Activated naive CD8-positive, alpha-beta T cell treated with anti-CD3 and anti-CD28 coated beads, Interleukin-2, amount 10 ng/mL, durations not matched to agents 7 days and 5 days (primary cell): ENCODE measurements at regions of chr2 and their contacts with region 1.

Region 1: DNA sequence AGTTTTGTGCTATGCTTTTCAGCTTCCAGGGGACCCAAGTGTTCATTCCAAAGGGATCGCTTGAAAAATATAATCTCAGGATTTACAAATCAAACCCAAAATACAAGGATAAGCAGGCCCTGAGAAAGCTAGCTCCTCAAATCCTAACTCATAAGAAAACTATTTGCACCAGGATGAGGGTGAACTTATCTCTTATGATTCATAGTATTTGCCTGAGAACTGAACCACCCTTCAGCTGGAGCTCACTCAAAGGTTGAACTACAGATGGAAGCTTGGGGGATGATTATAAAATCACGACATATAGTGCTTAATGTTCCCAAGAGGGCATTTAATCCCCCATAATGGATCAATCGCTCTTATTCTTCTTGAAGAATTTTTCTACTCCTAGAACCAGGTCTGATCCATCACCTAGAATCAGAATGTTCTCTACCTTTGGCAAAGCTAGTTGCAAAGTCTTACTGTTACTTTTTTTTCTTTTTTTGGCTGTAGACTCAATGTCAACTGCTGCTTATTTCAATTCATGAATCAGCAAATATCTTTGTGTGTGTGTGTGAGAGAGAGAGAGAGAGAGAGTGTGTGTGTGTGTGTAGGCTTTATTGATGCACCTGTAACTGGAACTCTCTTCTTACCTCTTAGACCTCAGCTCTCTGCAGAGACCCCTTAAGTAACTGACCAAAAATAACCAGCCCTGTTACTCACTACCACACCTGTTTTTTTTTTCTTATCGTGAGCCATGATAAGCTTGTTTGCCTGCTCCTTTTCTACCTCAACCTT is 44.8 kb downstream of the ARL4C start:
- DNase-seq: no peak
- ATAC-seq: peak; percentile 9
- H3K4me3 Mint-ChIP-seq: peak overlapping the region; percentile 91
- H3K27ac Mint-ChIP-seq: peak overlapping the region; percentile 90
- H3K4me1 Mint-ChIP-seq: peaks cover 72% of the 10 kb centered on the region
- H3K27me3 Mint-ChIP-seq: no peaks in the 10 kb centered on the region

Region 2: GRCh38 chr2:234135720-234136221 is 316.3 kb before region 1 on chr2:
- POLR2A ChIA-PET with region 1: interaction called, 10 read pairs
- DNase-seq: peak; percentile 57
- ATAC-seq: peak; percentile 79
- H3K4me3 Mint-ChIP-seq: no peak overlapping the region
- H3K27ac Mint-ChIP-seq: peak overlapping the region; percentile 55
- H3K4me1 Mint-ChIP-seq: peaks cover 14% of the 10 kb centered on the region
- H3K27me3 Mint-ChIP-seq: no peaks in the 10 kb centered on the region

Region 3: GRCh38 chr2:234240917-234241316 is 211.1 kb before region 1 on chr2:
- POLR2A ChIA-PET with region 1: no interaction called
- DNase-seq: no peak
- ATAC-seq: no peak
- H3K4me3 Mint-ChIP-seq: no peak overlapping the region
- H3K27ac Mint-ChIP-seq: no peak overlapping the region
- H3K4me1 Mint-ChIP-seq: peaks cover 12% of the 10 kb centered on the region
- H3K27me3 Mint-ChIP-seq: peaks cover under 1% of the 10 kb centered on the region

Region 4: DNA sequence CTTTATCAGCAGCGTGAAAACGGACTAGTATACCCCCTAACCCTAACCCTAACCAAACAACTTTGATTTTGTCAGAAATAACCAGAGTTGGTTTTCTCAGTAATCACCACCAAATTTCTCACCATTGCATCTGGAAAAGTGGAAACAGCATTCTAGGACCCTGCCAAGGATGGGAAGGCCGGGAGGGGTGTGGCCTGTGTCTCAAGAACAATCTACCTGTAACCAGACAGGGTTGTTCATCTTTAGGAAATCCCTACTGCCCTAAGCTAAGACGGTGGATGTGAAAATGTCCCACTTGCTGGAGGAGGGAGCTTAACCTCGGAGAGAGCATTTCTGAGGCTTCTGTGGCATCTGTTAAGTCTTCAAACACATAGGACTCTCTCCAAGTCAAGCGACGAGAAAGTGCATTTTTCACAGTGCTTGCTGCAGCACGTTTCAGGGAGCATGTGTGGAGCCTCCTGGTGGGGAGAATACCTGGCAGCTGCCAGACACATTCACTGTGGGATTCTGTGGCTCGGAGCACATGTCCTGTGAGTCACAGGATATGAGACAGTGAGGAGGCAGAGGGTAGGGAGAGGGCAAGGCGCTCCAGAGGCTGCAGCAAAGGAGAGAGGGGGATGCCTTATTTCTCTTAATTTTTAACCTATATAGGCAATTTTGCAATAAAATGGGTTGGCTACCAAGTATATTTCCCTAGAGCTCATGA is 194.0 kb before region 1 on chr2:
- POLR2A ChIA-PET with region 1: no interaction called
- DNase-seq: no peak
- ATAC-seq: no peak
- H3K4me3 Mint-ChIP-seq: no peak overlapping the region
- H3K27ac Mint-ChIP-seq: no peak overlapping the region
- H3K4me1 Mint-ChIP-seq: peaks cover 20% of the 10 kb centered on the region
- H3K27me3 Mint-ChIP-seq: no peaks in the 10 kb centered on the region

Region 5: GRCh38 chr2:234269769-234270204 is 182.3 kb before region 1 on chr2:
- POLR2A ChIA-PET with region 1: no interaction called
- DNase-seq: no peak
- ATAC-seq: no peak
- H3K4me3 Mint-ChIP-seq: no peak overlapping the region
- H3K27ac Mint-ChIP-seq: peak overlapping the region; percentile 30
- H3K4me1 Mint-ChIP-seq: peaks cover 62% of the 10 kb centered on the region
- H3K27me3 Mint-ChIP-seq: no peaks in the 10 kb centered on the region

Region 6: GRCh38 chr2:234318361-234318760 is 133.7 kb before region 1 on chr2:
- POLR2A ChIA-PET with region 1: no interaction called
- DNase-seq: no peak
- ATAC-seq: no peak
- H3K4me3 Mint-ChIP-seq: no peak overlapping the region
- H3K27ac Mint-ChIP-seq: no peak overlapping the region
- H3K4me1 Mint-ChIP-seq: peaks cover 31% of the 10 kb centered on the region
- H3K27me3 Mint-ChIP-seq: no peaks in the 10 kb centered on the region

Region 7: GRCh38 chr2:234374736-234375135 is 77.3 kb before region 1 on chr2:
- POLR2A ChIA-PET with region 1: interaction called, 12 read pairs
- DNase-seq: no peak
- ATAC-seq: no peak
- H3K4me3 Mint-ChIP-seq: no peak overlapping the region
- H3K27ac Mint-ChIP-seq: no peak overlapping the region
- H3K4me1 Mint-ChIP-seq: peaks cover 40% of the 10 kb centered on the region
- H3K27me3 Mint-ChIP-seq: no peaks in the 10 kb centered on the region

Region 8: DNA sequence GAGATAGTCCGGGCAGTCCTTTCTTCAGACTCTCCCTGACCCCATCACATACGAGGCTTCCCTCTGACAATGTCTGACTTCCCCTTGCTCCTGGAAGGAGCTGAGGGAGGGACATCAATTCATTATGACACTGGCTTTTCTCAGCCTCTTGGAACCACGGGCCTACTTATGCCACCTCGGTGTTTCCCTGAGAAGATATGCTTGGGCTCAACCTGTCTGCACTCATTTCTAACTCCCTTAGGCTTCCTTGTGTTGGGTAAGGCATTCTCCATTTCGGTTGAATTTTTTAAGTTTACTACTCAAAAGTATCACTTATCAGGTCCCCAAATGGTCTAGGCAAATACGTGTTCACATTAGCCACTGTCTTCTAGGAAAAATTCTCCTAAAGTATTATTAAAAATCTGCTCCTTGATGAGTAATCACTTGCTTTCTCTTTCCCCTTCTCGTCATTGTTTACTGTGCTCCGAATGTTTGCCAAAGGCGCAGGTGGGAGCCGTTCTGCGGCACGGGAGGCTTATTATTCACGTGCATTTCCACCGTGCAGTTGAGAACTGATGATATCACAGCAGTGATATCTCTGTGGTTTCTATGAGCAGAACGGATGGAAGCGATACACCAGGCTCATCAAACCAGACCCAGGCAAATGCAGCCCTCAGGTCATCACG is 11.7 kb after region 1 on chr2:
- POLR2A ChIA-PET with region 1: interaction called, 39 read pairs
- DNase-seq: peak; percentile 49
- ATAC-seq: peak; percentile 74
- H3K4me3 Mint-ChIP-seq: peak overlapping the region; percentile 86
- H3K27ac Mint-ChIP-seq: peak overlapping the region; percentile 90
- H3K4me1 Mint-ChIP-seq: peaks cover 42% of the 10 kb centered on the region
- H3K27me3 Mint-ChIP-seq: peaks cover 3% of the 10 kb centered on the region

Region 9: DNA sequence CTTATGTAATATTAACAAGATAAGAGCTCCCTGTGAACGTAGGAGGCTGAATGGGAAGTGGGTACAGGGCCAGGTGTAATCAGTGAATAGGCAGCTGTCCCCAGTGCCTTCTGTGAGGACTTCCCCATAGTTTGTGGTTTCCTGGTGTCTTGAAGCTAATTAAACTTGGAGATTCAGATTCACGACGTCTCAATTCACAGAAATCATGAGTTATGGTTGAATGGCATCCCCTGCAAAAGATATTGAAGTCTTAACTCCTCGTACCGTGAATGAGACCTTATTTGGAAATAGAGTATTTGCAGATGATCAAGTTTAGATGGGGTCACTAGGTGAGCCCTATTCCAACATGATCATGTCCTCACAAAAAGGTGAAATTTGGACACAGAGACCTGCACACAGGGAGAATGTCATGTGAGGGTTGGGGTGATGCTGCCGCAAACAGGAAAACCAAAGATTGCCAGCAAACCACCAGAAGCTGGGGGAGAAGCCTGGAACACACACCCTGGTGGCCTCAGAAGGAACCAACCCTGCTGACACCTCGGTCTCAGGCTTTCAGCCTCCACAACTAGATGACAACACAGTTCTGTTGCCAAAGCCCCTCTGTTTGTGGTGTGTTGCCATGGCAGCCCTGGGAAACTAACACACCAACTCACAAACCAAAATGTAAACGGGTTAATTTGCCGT is 31.7 kb after region 1 on chr2:
- POLR2A ChIA-PET with region 1: interaction called, 247 read pairs
- DNase-seq: peak; percentile 79
- ATAC-seq: peak; percentile 78
- H3K4me3 Mint-ChIP-seq: peak overlapping the region; percentile 72
- H3K27ac Mint-ChIP-seq: peak overlapping the region; percentile 85
- H3K4me1 Mint-ChIP-seq: peaks cover 57% of the 10 kb centered on the region
- H3K27me3 Mint-ChIP-seq: no peaks in the 10 kb centered on the region